PC-3 (cell line): ENCODE measurements at regions of chr1 and their contacts with region 1.

Region 1: GRCh38 chr1:159171688-159172501 is 480 bp downstream of the CADM3 start:
- DNase-seq: no peak
- ATAC-seq: no peak
- H3K4me3 ChIP-seq: no peak overlapping the region
- H3K27ac ChIP-seq: no peak overlapping the region
- H3K4me1 ChIP-seq: no peaks in the 10 kb centered on the region
- H3K27me3 ChIP-seq: peaks cover 72% of the 10 kb centered on the region
- CTCF ChIP-seq: no peak

Region 2: GRCh38 chr1:158793604-158794003 is 378.3 kb before region 1 on chr1:
- CTCF ChIA-PET with region 1: interaction called, 10 read pairs
- POLR2A ChIA-PET with region 1: no interaction called
- intact Hi-C with region 1: no loop called
- DNase-seq: no peak
- ATAC-seq: no peak
- H3K4me3 ChIP-seq: no peak overlapping the region
- H3K27ac ChIP-seq: no peak overlapping the region
- H3K4me1 ChIP-seq: no peaks in the 10 kb centered on the region
- H3K27me3 ChIP-seq: no peaks in the 10 kb centered on the region; the same call in 1 of the 2 replicates
- CTCF ChIP-seq: no peak; the same call in 1 of the 2 replicates